WTC11 (cell line): ENCODE measurements at regions of chr16 and their contacts with region 1.

Region 1: GRCh38 chr16:77584205-77584859 is 138.0 kb upstream of the NUDT7 start:
- DNase-seq: peak; percentile 53
- ATAC-seq: peak; percentile 74
- H3K4me3 Mint-ChIP-seq: no peak overlapping the region
- H3K27ac Mint-ChIP-seq: no peak overlapping the region
- H3K4me1 Mint-ChIP-seq: peaks cover 19% of the 10 kb centered on the region
- H3K27me3 Mint-ChIP-seq: no peaks in the 10 kb centered on the region; the same call in 1 of the 2 replicates
- CTCF ChIP-seq: peak; percentile 79

Region 2: DNA sequence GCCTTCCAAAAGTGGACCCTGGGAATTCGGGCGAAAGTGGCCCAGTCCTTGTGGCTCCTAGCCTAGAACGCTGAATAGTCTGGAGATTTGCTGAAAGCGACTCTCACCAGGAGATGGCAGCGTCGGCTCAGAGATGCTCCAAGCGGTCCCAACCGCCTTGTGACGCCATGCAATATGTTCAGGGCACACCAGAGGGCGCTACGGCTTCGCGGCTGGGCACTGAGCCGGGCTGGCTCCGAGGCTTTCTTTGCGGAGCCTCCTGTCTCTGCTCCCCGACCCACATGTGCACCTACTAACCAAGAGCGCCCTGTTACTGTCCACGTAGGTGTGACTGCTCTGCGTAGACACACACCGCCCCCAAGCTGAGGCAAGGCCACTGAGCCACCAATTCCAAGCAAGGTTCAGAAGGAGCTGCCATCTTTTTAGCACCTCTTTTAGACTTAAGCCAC is 348.2 kb before region 1 on chr16:
- CTCF ChIA-PET with region 1: interaction called, 34 read pairs
- POLR2A ChIA-PET with region 1: no interaction called
- DNase-seq: peak; percentile 94
- ATAC-seq: peak; percentile 89
- H3K4me3 Mint-ChIP-seq: no peak overlapping the region
- H3K27ac Mint-ChIP-seq: no peak overlapping the region
- H3K4me1 Mint-ChIP-seq: peaks cover 46% of the 10 kb centered on the region
- H3K27me3 Mint-ChIP-seq: peaks cover 5% of the 10 kb centered on the region
- CTCF ChIP-seq: peak; percentile 96

Region 3: DNA sequence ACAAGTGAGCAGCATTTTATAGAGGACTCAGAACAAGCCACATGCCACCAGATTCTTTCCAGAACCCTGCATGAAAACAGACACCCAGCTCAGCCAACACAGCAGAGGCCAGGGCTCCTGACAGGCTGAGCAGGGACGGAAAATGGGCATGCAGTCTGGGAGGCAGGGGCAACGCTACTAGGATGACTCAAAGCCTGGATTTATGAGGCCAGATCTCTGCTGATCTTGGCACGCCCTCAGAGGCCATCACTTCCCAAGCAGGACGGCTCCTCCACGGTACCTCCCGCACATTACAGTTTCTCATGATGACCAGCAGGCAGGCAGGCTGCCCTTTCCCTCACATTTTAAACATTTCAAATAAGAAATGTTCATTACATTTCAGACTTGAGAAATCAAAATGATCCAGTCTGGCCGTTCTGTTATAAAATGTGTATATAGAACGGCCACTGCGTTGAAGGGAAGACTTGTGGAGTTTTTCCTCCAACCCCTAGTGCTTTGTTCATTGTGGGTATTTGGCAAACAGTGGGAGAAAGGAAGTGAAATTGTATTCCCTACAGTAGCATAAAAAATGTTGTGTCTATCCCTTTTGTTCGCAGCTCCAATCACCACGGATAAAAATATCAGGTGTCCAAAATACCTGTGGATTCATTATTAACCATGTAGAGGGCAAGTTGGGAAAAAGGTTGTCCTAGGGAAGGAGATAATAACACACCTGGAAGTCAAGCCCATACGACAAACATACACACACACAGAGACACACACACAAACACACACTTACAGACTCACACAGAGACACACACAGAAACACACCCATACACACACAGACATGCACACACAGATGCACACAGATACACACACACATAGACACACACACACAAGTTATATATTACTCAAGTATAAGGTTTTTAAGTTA is 84.7 kb before region 1 on chr16:
- CTCF ChIA-PET with region 1: interaction called, 10 read pairs
- POLR2A ChIA-PET with region 1: no interaction called
- DNase-seq: peak; percentile 8
- ATAC-seq: no peak
- H3K4me3 Mint-ChIP-seq: no peak overlapping the region
- H3K27ac Mint-ChIP-seq: no peak overlapping the region
- H3K4me1 Mint-ChIP-seq: peaks cover 40% of the 10 kb centered on the region
- H3K27me3 Mint-ChIP-seq: peaks cover 14% of the 10 kb centered on the region
- CTCF ChIP-seq: no peak